ENCODE measurements at regions of chrX and their contacts with region 1.

Region 1: GRCh38 chrX:70133303-70134115 is at the start of gene IGBP1:
- DNase-seq: peak; percentile 82
- H3K4me3 Mint-ChIP-seq: peak within 1 kb of the TSS; percentile 97
- H3K27ac Mint-ChIP-seq: peak within 1 kb of the TSS; percentile 89
- H3K4me1 Mint-ChIP-seq: peaks cover 27% of the 10 kb centered on the region
- H3K27me3 Mint-ChIP-seq: no peaks in the 10 kb centered on the region
- total RNA-seq, gene IGBP1: 48.7 to 50.8 TPM

Region 2: DNA sequence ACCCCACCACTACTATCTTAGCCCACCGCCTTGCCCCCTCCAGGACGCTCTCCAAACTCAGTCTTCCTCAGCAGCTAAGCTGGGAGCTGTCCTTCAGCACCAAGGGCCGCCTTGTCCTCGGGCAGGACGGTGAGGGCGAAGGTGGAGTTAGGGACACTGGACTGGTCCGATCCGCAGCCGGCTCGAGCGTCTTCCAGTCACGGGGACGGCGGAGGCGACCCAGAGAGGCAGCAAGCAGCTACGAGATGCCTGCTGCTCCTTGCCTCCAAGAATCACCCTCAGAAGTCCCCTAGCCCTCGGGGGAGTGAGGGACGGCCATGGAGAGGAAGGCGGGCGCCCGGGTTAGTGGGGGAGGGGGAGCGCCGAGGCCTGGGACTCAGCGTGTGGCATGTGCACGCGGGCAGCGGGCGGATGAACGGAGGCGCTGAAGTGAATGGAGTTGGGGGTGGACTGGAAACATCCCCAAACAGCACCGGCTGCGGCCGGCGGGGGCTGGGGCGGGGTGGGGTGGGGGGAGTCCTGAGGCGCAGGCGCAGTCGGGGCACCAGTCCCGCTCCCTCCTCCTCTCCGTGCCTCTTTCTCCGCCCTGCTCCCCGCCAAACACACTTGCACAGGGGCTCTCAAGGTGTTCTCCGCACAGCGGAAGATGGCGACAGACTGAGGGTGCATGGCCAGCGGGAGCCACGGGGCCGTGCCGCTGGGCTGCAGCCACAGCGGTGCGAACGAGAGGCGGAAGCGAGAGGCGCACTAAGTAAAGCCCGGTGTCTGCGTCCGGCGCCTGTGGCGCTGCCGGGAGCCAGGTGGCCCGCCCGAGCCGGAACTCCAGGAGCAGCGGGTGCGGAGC is 629.5 kb before region 1 on chrX and contains the start of gene NALF2:
- CTCF ChIA-PET with region 1: no interaction called
- intact Hi-C with region 1: loop called (anchors 2 kb)
- DNase-seq: peak; percentile 61
- H3K4me3 Mint-ChIP-seq: peak within 1 kb of the TSS; percentile 77
- H3K27ac Mint-ChIP-seq: no peak within 1 kb of the TSS
- H3K4me1 Mint-ChIP-seq: peaks cover 4% of the 10 kb centered on the region
- H3K27me3 Mint-ChIP-seq: peaks cover 15% of the 10 kb centered on the region
- total RNA-seq, gene NALF2: 0.22 to 0.29 TPM

Region 3: GRCh38 chrX:69615779-69616456 is 517.6 kb before region 1 on chrX and contains the start of gene EDA:
- CTCF ChIA-PET with region 1: no interaction called
- intact Hi-C with region 1: loop called (anchors 5 kb)
- DNase-seq: peak; percentile 74
- H3K4me3 Mint-ChIP-seq: peak within 1 kb of the TSS; percentile 84
- H3K27ac Mint-ChIP-seq: no peak within 1 kb of the TSS
- H3K4me1 Mint-ChIP-seq: peaks cover 21% of the 10 kb centered on the region
- H3K27me3 Mint-ChIP-seq: peaks cover 3% of the 10 kb centered on the region
- total RNA-seq, gene EDA: 4.2 to 5.1 TPM

Region 4: GRCh38 chrX:70174754-70175153 is 41.2 kb after region 1 on chrX:
- CTCF ChIA-PET with region 1: interaction called, 3 read pairs
- intact Hi-C with region 1: loop called (anchors 1 kb)
- DNase-seq: no peak
- H3K4me3 Mint-ChIP-seq: no peak overlapping the region
- H3K27ac Mint-ChIP-seq: no peak overlapping the region
- H3K4me1 Mint-ChIP-seq: peaks cover 4% of the 10 kb centered on the region
- H3K27me3 Mint-ChIP-seq: no peaks in the 10 kb centered on the region

Region 5: GRCh38 chrX:70289793-70290776 is 156.6 kb after region 1 on chrX and contains the starts of genes KIF4A and PDZD11:
- CTCF ChIA-PET with region 1: interaction called, 6 read pairs
- intact Hi-C with region 1: loop called (anchors 1 kb)
- DNase-seq: peak; percentile 86
- H3K4me3 Mint-ChIP-seq: peak within 1 kb of the TSS; percentile 90
- H3K27ac Mint-ChIP-seq: peak within 1 kb of the TSS; percentile 83
- H3K4me1 Mint-ChIP-seq: peaks cover 5% of the 10 kb centered on the region
- H3K27me3 Mint-ChIP-seq: no peaks in the 10 kb centered on the region
- total RNA-seq, gene KIF4A: 27.1 to 29.6 TPM
- total RNA-seq, gene PDZD11: 24.5 to 25.9 TPM

Measured in activated naive CD4-positive, alpha-beta T cell treated with anti-CD3 and anti-CD28 coated beads for 36 hours (primary cell).